Caco-2 (cell line): ENCODE measurements at regions of chr9 and their contacts with region 1.

Region 1: GRCh38 chr9:92234514-92234913 is 59.0 kb downstream of the IARS1 start:
- DNase-seq: no peak
- H3K4me3 ChIP-seq: no peak overlapping the region
- H3K4me3 Mint-ChIP-seq: no peak overlapping the region
- H3K27ac Mint-ChIP-seq: no peak overlapping the region
- H3K4me1 ChIP-seq: no peaks in the 10 kb centered on the region
- H3K4me1 Mint-ChIP-seq: no peaks in the 10 kb centered on the region
- H3K27me3 ChIP-seq: no peaks in the 10 kb centered on the region
- H3K27me3 Mint-ChIP-seq: no peaks in the 10 kb centered on the region
- CTCF ChIP-seq: no peak

Region 2: DNA sequence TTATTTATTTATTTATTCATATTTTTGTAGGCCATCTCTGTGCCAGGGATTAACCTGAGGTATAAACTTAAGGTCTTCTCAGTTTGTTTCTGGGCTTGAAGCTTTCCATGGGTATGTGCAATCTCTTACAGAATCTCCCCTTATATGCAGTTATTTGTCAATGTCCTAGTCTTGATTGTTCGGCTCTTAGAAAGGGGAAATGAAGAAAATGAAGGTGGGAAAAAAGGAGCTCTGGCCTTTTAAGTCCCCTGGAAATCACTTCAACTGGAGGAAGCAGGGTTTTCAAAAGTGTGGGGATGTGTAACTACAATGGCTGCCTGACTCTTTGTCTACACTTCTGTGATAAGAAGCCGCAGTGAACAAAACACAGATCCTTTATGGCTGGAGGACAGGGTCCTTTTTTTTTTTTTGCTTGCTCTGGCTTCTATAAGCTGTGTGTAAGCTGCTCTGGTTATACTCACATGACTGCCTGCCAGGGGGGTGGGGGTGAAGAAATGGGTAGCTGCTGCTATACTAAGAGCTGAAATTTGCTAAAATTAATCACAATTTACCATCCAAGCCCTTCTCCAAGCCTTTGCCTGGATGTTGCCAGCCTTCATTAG is 125.0 kb after region 1 on chr9:
- CTCF ChIA-PET with region 1: no interaction called
- POLR2A ChIA-PET with region 1: no interaction called
- intact Hi-C with region 1: no loop called
- DNase-seq: no peak
- H3K4me3 ChIP-seq: no peak overlapping the region
- H3K4me3 Mint-ChIP-seq: no peak overlapping the region
- H3K27ac Mint-ChIP-seq: no peak overlapping the region
- H3K4me1 ChIP-seq: no peaks in the 10 kb centered on the region
- H3K4me1 Mint-ChIP-seq: no peaks in the 10 kb centered on the region
- H3K27me3 ChIP-seq: no peaks in the 10 kb centered on the region
- H3K27me3 Mint-ChIP-seq: no peaks in the 10 kb centered on the region
- CTCF ChIP-seq: no peak

Region 3: GRCh38 chr9:92650839-92651621 is 416.5 kb after region 1 on chr9:
- CTCF ChIA-PET with region 1: no interaction called
- POLR2A ChIA-PET with region 1: no interaction called
- intact Hi-C with region 1: loop called (anchors 10 kb)
- DNase-seq: peak in 1 of 2 experiments; percentile 2
- H3K4me3 ChIP-seq: no peak overlapping the region
- H3K4me3 Mint-ChIP-seq: no peak overlapping the region
- H3K27ac Mint-ChIP-seq: no peak overlapping the region
- H3K4me1 ChIP-seq: no peaks in the 10 kb centered on the region
- H3K4me1 Mint-ChIP-seq: no peaks in the 10 kb centered on the region
- H3K27me3 ChIP-seq: no peaks in the 10 kb centered on the region
- H3K27me3 Mint-ChIP-seq: no peaks in the 10 kb centered on the region
- CTCF ChIP-seq: no peak